HEK293 (cell line): ENCODE measurements at regions of chr5 and their contacts with region 1.

Region 1: GRCh38 chr5:138503487-138504270 is 38.4 kb downstream of the EGR1 start:
- H3K4me3 ChIP-seq: no peak overlapping the region
- H3K27ac ChIP-seq: no peak overlapping the region
- H3K4me1 ChIP-seq: no peaks in the 10 kb centered on the region
- CTCF ChIP-seq: peak; percentile 74

Region 2: GRCh38 chr5:137563646-137564397 is 939.9 kb before region 1 on chr5:
- CTCF ChIA-PET with region 1: no interaction called
- POLR2A ChIA-PET with region 1: no interaction called
- H3K4me3 ChIP-seq: no peak overlapping the region
- H3K27ac ChIP-seq: no peak overlapping the region
- H3K4me1 ChIP-seq: peaks cover 9% of the 10 kb centered on the region
- CTCF ChIP-seq: no peak

Region 3: DNA sequence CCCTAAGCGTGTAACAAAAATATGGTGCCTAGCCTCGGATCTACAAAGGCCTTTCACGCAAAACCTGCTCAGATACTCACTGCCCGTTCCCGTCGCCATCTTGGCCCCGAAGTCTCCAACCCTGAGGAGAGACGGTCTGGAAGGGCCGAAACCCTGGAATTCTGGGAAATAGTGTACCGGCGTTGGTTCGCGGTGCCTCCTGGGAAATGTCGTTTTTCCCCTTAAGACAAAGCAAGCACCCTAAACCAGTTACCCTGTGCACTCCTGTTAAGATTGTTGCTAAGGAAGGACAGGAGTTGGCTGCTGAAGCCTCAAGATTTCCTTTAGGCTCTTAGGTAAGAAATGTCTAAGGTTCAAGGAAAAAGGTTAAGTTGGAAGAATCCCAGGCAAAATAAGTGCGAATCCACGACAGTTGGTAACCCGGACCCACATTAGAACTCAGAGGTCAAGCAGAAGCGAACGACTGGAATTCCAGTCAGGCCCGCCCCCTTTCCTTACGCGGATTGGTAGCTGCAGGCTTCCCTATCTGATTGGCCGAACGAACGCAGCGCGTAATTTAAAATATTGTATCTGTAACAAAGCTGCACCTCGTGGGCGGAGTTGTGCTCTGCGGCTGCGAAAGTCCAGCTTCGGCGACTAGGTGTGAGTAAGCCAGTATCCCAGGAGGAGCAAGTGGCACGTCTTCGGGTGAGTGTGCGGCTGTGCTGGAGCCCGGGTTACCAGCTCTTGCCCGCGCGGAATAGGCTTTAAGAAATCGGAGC is 325.0 kb before region 1 on chr5 and contains the starts of genes BRD8 and KIF20A:
- CTCF ChIA-PET with region 1: interaction called, 13 read pairs
- POLR2A ChIA-PET with region 1: interaction called, 3 read pairs
- H3K4me3 ChIP-seq: peak within 1 kb of the TSS; percentile 70
- H3K27ac ChIP-seq: peak within 1 kb of the TSS; percentile 90
- H3K4me1 ChIP-seq: 0 out of 2 replicates have a peak, but pooled peaks cover 3% of the 10 kb centered on the region
- CTCF ChIP-seq: no peak

Region 4: DNA sequence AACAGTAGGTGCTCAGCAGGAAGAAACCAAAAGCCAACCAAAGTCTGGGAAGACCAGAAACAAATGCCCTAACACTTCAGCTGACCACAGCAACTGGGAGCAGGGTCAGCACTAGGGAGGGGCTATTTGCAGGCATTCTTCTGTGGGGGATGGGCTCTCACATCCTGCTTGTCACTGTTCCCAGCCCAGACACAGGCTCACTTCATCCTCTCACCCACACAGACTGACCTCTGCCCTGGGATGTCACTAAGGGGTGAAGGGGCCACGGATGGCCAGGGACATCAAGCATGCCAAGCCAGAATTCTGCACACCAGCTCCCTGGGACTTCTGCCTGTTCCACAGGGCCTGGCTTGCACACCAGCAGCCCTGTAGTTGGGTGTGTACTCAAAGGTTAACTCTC is 258.0 kb before region 1 on chr5:
- CTCF ChIA-PET with region 1: no interaction called
- POLR2A ChIA-PET with region 1: no interaction called
- H3K4me3 ChIP-seq: no peak overlapping the region
- H3K27ac ChIP-seq: no peak overlapping the region
- H3K4me1 ChIP-seq: peaks cover 6% of the 10 kb centered on the region; the same call in 1 of the 2 replicates
- CTCF ChIP-seq: no peak

Region 5: DNA sequence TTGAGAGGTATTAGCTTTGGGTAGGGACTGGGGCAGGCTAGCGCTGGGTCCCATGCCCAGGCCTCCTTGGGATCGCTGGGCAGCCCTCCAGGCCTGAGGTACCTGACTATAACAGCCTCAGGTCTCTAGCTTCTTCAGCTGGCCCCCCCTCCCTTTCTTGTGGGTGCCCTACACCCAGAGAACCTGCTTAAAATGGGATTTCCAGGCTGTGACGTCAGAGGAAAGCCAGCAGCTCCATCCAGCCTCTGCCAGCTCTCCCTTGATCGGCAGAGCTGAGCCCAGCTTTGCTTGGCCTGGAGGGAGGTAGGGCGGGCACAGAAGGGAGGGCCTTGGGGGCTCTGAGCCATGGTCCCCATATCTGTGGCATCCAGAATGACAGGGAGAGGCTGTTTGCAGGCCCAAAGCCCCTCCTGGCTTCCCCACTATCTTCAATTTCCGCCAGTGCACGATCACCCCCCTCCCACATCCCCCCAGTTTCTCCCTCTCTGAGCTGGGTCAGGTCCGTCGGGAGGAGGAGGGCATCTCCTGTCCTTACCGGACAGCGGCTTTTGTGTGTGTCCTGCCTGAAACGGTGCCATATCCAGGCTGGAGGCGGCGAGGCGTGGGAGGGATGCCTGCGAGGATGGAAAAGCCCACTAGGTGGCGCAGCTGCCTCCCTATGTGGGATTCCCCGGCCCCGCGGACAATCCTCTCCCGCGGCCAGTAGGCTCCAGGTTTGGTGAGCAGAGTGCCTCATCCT is 54.0 kb before region 1 on chr5:
- CTCF ChIA-PET with region 1: interaction called, 110 read pairs
- POLR2A ChIA-PET with region 1: interaction called, 4 read pairs
- H3K4me3 ChIP-seq: no peak overlapping the region
- H3K27ac ChIP-seq: no peak overlapping the region
- H3K4me1 ChIP-seq: 0 out of 2 replicates have a peak, but pooled peaks cover 2% of the 10 kb centered on the region
- CTCF ChIP-seq: peak; percentile 96

Region 6: DNA sequence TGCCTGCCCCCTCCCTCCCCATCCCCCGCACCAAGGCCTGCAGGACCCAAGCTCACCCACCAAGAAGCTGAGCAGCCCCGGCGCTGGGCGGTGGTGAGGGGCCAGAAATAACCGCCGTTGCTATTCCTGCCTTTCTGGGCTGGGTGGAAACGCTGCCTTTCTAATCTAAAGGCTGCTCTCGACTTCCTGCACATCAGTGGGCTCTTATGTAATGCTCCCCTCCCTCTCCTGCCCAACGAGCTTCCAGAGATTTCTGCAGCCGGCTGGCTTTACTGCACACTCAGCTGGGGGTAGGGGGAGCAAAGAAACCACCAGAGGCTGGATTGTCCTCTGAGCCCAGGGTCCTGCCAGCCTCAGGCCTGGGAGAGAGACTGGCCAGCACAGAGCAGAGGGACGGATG is 45.3 kb before region 1 on chr5:
- CTCF ChIA-PET with region 1: interaction called, 51 read pairs
- POLR2A ChIA-PET with region 1: interaction called, 4 read pairs
- H3K4me3 ChIP-seq: no peak overlapping the region
- H3K27ac ChIP-seq: no peak overlapping the region
- H3K4me1 ChIP-seq: peaks cover 2% of the 10 kb centered on the region; the same call in 1 of the 2 replicates
- CTCF ChIP-seq: no peak

Region 7: DNA sequence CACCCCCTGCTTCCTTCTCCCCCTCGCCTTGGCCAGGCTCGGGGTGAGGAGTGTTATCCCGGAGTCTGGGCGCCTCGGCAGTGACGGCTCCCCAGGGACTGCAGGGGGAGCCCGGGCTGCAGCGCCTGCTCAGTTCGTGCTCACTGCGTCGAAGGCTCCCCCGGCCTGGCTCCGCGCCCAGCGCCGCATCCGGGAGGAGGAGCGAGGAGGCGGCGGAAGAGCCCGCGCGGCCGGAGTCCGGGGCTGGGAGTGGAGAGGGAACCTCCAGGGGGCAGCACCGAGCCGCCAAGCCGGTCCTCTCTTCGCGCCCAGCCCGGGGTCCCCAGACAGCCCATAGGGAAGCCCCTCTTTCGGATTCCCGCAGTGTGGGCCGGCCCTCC is 39.7 kb before region 1 on chr5:
- CTCF ChIA-PET with region 1: interaction called, 51 read pairs
- POLR2A ChIA-PET with region 1: interaction called, 25 read pairs
- H3K4me3 ChIP-seq: peak overlapping the region; percentile 88
- H3K27ac ChIP-seq: peak overlapping the region; percentile 94
- H3K4me1 ChIP-seq: peaks cover 4% of the 10 kb centered on the region; the same call in 1 of the 2 replicates
- CTCF ChIP-seq: peak; percentile 97

Region 8: DNA sequence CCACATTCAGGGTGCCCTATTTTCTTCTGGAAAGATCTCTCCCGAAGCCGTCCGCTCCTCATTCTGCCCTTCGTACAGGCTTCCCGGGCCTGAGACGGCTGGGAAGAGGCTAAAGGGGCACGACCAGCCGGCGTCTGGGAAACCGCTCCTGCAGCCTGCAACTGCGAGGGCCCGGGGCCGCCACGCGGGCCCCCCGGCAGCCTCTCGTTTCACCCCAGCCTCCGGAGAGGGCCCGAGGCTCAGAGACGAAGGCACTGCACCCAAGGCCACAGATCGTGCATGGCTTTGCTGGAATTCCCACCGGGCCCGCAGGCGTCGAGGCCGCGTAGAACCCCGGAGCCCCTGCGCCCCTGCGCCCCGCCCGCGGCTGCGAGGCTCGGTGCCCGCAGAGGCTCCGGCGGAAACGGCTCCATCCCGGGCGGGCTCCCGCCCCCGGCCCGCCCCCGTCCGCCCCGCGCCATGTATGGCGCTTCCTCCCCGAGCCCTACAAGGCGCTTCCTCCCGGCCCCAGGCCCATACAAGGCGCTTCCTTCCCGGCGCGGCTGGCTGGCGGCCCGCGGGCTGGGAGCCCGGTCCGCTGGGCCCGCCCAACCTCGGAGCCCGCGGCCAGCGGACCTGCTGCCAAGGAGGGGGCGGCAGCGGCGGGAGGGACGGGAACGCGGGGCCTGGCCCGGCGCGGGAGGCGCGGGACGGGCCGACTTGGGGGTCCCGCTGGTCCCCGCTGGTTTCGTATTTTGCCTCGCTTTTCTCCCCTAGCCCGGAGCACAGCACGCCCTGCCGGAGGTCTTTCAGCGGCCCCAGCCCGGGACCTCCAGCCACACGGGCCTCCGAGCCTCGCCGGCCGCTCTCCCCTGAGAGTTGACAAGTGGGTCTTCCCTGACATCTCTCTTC is 11.8 kb before region 1 on chr5:
- CTCF ChIA-PET with region 1: interaction called, 15 read pairs
- POLR2A ChIA-PET with region 1: no interaction called
- H3K4me3 ChIP-seq: peak overlapping the region; percentile 47
- H3K27ac ChIP-seq: peak overlapping the region; percentile 64
- H3K4me1 ChIP-seq: peaks cover 8% of the 10 kb centered on the region
- CTCF ChIP-seq: peak; percentile 20; the same call in 1 of the 2 replicates

Region 9: GRCh38 chr5:138542956-138543729 is 39.5 kb after region 1 on chr5 and contains the start of gene ETF1:
- CTCF ChIA-PET with region 1: interaction called, 12 read pairs
- POLR2A ChIA-PET with region 1: interaction called, 3 read pairs
- H3K4me3 ChIP-seq: peak within 1 kb of the TSS; percentile 100
- H3K27ac ChIP-seq: peak within 1 kb of the TSS; percentile 77
- H3K4me1 ChIP-seq: peaks cover 11% of the 10 kb centered on the region
- CTCF ChIP-seq: no peak